Sigmoid colon (tissue), 7 donors: ENCODE measurements at regions of chr17 and their contacts with region 1.

Region 1: GRCh38 chr17:17919169-17920107 is 52.8 kb downstream of the TOM1L2 start:
- DNase-seq: peak; percentile 89
- H3K4me3 ChIP-seq: no peak overlapping the region
- H3K27ac ChIP-seq: peak overlapping the region in 3 of 4 donors; percentile 33 to 51 (median 50)
- H3K4me1 ChIP-seq: peaks cover 0 to 54% (median 47%) of the 10 kb centered on the region in 4 donors
- H3K27me3 ChIP-seq: no peaks in the 10 kb centered on the region
- CTCF ChIP-seq: peak; percentile 52 to 80 (median 67)
- EP300 ChIP-seq: no peak
- POLR2A ChIP-seq: no peak

Region 2: DNA sequence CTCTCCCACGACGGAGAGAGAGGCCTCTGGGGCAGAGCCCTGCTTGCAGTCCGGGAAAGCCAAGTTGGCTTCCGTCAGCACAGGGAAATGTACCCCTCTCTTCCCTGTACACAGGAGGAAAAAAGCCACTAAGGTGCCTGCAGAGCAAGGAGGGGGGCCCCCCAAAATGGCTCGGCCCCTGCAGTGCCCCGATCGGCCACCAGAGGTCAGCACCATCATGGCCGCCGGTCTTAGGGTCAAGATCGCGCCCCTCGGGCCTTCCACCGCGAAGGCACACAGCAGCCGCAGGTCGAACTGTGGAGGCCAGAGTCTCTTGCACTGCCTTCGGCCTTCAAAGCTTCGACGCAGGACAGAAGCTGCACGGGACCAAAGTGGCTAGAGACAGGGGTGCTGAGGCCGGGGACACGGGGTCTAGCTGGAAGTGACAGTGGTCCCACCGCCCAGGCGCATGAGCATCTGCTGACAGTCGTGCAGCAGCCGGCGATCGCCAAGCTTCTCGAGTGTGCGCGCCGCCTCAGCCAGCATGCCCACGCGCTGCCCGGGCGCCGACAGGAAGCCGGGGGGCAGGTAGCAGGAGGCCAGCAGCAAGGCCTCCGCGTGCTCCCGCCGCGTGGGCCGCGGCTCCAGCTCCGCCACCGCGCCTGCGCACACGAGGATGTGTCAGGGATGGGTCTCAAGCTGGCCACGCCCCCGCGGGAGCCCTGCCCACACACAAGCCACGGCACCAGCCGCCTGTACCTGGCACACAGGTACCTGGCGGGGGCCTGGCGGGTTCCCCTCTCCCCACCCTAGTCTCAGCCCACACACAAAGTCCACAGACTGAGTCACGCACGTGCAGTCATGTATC is 107.0 kb before region 1 on chr17:
- intact Hi-C with region 1: loop called (anchors 2 kb)
- DNase-seq: peak; percentile 89
- H3K4me3 ChIP-seq: no peak overlapping the region
- H3K27ac ChIP-seq: peak overlapping the region; percentile 31 to 90 (median 83)
- H3K4me1 ChIP-seq: peaks cover 0 to 66% (median 57%) of the 10 kb centered on the region in 4 donors
- H3K27me3 ChIP-seq: no peaks in the 10 kb centered on the region
- CTCF ChIP-seq: peak; percentile 99 to 100 (median 100)
- EP300 ChIP-seq: no peak
- POLR2A ChIP-seq: no peak

Region 3: GRCh38 chr17:17877529-17878358 is 41.7 kb before region 1 on chr17:
- intact Hi-C with region 1: loop called (anchors 5 kb)
- DNase-seq: peak; percentile 96
- H3K4me3 ChIP-seq: no peak overlapping the region
- H3K27ac ChIP-seq: peak overlapping the region; percentile 85 to 92 (median 88)
- H3K4me1 ChIP-seq: peaks cover 0 to 70% (median 50%) of the 10 kb centered on the region in 4 donors
- H3K27me3 ChIP-seq: no peaks in the 10 kb centered on the region
- CTCF ChIP-seq: peak in 1 of 4 experiments; percentile 9
- EP300 ChIP-seq: peak in 3 of 4 donors; percentile 53 to 75 (median 62)
- POLR2A ChIP-seq: no peak

Region 4: GRCh38 chr17:17959520-17960361 is 40.3 kb after region 1 on chr17:
- intact Hi-C with region 1: no loop called
- DNase-seq: no peak
- H3K4me3 ChIP-seq: peak overlapping the region in 3 of 4 donors; percentile 18 to 30 (median 23)
- H3K27ac ChIP-seq: peak overlapping the region; percentile 67 to 76 (median 72)
- H3K4me1 ChIP-seq: peaks cover 0 to 59% (median 50%) of the 10 kb centered on the region in 4 donors
- H3K27me3 ChIP-seq: no peaks in the 10 kb centered on the region
- CTCF ChIP-seq: no peak
- EP300 ChIP-seq: no peak
- POLR2A ChIP-seq: no peak

Region 5: DNA sequence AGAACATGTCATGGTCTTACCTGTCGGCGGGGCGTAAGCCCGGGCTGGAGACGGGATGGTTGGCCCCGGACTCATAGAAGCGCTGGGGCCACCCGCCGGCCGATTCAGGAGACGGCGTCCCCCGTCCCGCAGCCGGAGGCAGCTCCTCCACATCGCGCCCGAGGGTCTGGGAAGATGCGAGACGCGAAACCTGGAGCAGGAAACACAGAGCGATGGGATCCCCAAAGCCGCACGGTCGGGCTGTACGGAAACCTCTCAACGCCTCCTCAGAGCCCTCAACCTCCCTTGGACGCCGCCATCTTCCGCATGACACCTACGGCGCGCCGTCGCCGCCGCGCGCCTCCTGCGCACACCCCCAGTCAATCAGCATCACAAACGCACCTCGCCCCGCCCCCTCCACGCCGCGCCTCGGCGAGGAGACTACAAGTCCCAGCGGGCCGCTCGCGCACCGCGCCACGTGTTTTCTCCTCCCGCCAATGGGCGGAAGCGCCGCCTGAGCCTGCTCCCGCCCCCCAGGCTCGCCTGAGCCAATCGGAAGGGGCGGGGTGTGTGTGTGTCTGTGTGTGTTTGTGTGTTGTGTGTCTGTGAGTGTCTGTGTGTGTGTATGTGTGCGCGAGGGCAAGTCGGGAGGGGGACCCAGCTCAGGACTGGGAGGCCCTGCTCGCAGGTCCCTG is 119.6 kb after region 1 on chr17 and contains the starts of genes ATPAF2 and GID4:
- intact Hi-C with region 1: loop called (anchors 5 kb)
- DNase-seq: peak; percentile 100
- H3K4me3 ChIP-seq: peak within 1 kb of the TSS; percentile 80 to 96 (median 87)
- H3K27ac ChIP-seq: peak within 1 kb of the TSS; percentile 84 to 91 (median 89)
- H3K4me1 ChIP-seq: peaks cover 0 to 45% (median 37%) of the 10 kb centered on the region in 4 donors
- H3K27me3 ChIP-seq: no peaks in the 10 kb centered on the region
- CTCF ChIP-seq: no peak
- EP300 ChIP-seq: no peak
- POLR2A ChIP-seq: no peak
- total RNA-seq, gene ATPAF2: 10.3 to 28.8 (median 15.3) TPM
- total RNA-seq, gene GID4: 20.0 to 25.2 (median 23.9) TPM